CD4-positive, alpha-beta T cell (primary cell): ENCODE measurements at regions of chr17 and their contacts with region 1.

Region 1: GRCh38 chr17:35242805-35243560 is at the start of gene SLFN5:
- DNase-seq: peak; percentile 89 to 97 (median 94)
- ATAC-seq: peak; percentile 79
- H3K4me3 ChIP-seq: peak within 1 kb of the TSS; percentile 99
- H3K4me3 Mint-ChIP-seq: peak within 1 kb of the TSS; percentile 99
- H3K27ac ChIP-seq: peak within 1 kb of the TSS; percentile 92 to 99
- H3K27ac Mint-ChIP-seq: peak within 1 kb of the TSS; percentile 100
- H3K4me1 ChIP-seq: peaks cover 42% of the 10 kb centered on the region
- H3K4me1 Mint-ChIP-seq: peaks cover 61% of the 10 kb centered on the region
- H3K27me3 ChIP-seq: no peaks in the 10 kb centered on the region
- H3K27me3 Mint-ChIP-seq: no peaks in the 10 kb centered on the region
- CTCF ChIP-seq: no peak
- total RNA-seq, gene SLFN5: 28.5 to 32.7 TPM

Region 2: DNA sequence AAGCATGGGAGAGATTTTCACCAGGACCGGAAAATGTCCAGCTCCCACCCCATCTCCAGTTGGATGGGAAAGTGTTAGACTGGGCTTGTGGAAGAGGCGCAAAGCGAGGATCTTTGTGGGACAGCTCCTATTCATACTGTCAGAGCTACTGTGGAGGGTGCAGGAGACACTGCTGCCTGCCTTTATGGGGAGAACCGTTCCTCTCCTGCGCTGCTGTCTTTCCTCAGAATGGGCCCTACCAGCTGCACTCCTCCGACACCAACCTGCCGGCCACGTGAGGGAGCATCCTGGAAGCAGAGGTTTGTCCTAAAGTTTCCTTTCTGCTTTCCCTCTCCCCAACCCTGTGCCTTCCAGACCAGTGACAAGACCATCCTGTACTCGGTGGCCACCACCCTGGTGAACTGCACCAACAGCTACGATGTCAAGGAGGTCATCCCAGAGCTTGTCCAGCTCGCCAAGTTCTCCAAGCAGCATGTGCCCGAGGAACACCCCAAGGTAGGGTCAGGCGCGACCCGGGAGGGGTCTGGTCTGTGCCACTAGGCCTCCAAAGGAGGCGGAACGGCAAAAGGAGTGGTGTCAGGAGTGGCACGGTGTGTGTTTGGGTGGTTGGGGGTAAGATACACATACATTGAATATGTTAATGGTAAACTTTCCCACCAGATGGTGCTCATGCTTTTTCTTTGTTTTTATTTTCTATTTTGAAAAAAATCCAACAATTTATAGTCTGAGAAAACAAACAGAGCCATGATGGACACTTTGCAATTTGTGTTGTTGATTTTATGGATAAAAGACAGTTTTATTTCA is 71.8 kb before region 1 on chr17:
- CTCF ChIA-PET with region 1: interaction called, 3 read pairs
- POLR2A ChIA-PET with region 1: interaction called, 56 read pairs
- intact Hi-C with region 1: loop called (anchors 1 kb)
- DNase-seq: peak in 9 of 14 experiments; percentile 13 to 80 (median 42)
- ATAC-seq: peak; percentile 79
- H3K4me3 ChIP-seq: no peak overlapping the region
- H3K4me3 Mint-ChIP-seq: peak overlapping the region; percentile 80
- H3K27ac ChIP-seq: no peak overlapping the region
- H3K27ac Mint-ChIP-seq: peak overlapping the region; percentile 92
- H3K4me1 ChIP-seq: peaks cover 40% of the 10 kb centered on the region
- H3K4me1 Mint-ChIP-seq: peaks cover 52% of the 10 kb centered on the region
- H3K27me3 ChIP-seq: no peaks in the 10 kb centered on the region
- H3K27me3 Mint-ChIP-seq: no peaks in the 10 kb centered on the region
- CTCF ChIP-seq: peak; percentile 68

Region 3: GRCh38 chr17:35227546-35227945 is 15.4 kb before region 1 on chr17:
- CTCF ChIA-PET with region 1: interaction called, 7 read pairs
- POLR2A ChIA-PET with region 1: interaction called, 18 read pairs
- intact Hi-C with region 1: no loop called
- DNase-seq: no peak
- ATAC-seq: no peak
- H3K4me3 ChIP-seq: no peak overlapping the region
- H3K4me3 Mint-ChIP-seq: no peak overlapping the region
- H3K27ac ChIP-seq: no peak overlapping the region
- H3K27ac Mint-ChIP-seq: no peak overlapping the region
- H3K4me1 ChIP-seq: peaks cover 9% of the 10 kb centered on the region
- H3K4me1 Mint-ChIP-seq: peaks cover 74% of the 10 kb centered on the region
- H3K27me3 ChIP-seq: no peaks in the 10 kb centered on the region
- H3K27me3 Mint-ChIP-seq: no peaks in the 10 kb centered on the region
- CTCF ChIP-seq: no peak

Region 4: GRCh38 chr17:35359398-35359797 is 116.4 kb after region 1 on chr17:
- CTCF ChIA-PET with region 1: no interaction called
- POLR2A ChIA-PET with region 1: no interaction called
- intact Hi-C with region 1: no loop called
- DNase-seq: no peak
- ATAC-seq: no peak
- H3K4me3 ChIP-seq: no peak overlapping the region
- H3K4me3 Mint-ChIP-seq: no peak overlapping the region
- H3K27ac ChIP-seq: no peak overlapping the region
- H3K27ac Mint-ChIP-seq: no peak overlapping the region
- H3K4me1 ChIP-seq: peaks cover 7% of the 10 kb centered on the region
- H3K4me1 Mint-ChIP-seq: peaks cover 18% of the 10 kb centered on the region
- H3K27me3 ChIP-seq: no peaks in the 10 kb centered on the region
- H3K27me3 Mint-ChIP-seq: no peaks in the 10 kb centered on the region
- CTCF ChIP-seq: no peak

Region 5: DNA sequence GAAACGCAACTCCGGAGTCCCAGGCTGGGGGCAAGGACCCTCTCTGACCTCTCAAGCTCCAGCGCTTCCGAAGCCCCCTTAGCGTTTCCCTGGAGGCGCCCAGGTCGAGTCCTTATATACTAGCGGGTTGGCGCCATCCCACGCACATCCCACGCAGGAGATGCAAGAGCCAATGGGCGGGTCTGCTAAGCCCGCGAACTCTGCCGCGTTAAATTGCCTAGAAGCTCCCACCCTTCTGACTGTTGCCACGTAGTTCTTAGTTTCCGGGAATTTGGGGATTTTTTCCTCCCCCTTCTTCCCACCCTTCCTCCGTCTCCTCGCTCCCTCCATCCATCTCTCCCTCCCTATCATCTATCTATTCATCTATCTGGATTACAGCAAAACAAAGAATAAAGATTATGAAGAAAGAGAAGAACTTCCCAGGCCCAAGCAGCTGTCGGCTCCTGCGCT is 130.6 kb after region 1 on chr17 and contains the start of gene SLFN11:
- CTCF ChIA-PET with region 1: no interaction called
- POLR2A ChIA-PET with region 1: interaction called, 8 read pairs
- intact Hi-C with region 1: loop called (anchors 2 to 10 kb)
- DNase-seq: peak; percentile 50 to 94 (median 71)
- ATAC-seq: peak; percentile 88
- H3K4me3 ChIP-seq: peak within 1 kb of the TSS; percentile 84
- H3K4me3 Mint-ChIP-seq: peak within 1 kb of the TSS; percentile 96
- H3K27ac ChIP-seq: peak within 1 kb of the TSS; percentile 80 to 96
- H3K27ac Mint-ChIP-seq: peak within 1 kb of the TSS; percentile 95
- H3K4me1 ChIP-seq: peaks cover 16% of the 10 kb centered on the region
- H3K4me1 Mint-ChIP-seq: peaks cover 62% of the 10 kb centered on the region
- H3K27me3 ChIP-seq: no peaks in the 10 kb centered on the region
- H3K27me3 Mint-ChIP-seq: no peaks in the 10 kb centered on the region
- CTCF ChIP-seq: no peak
- total RNA-seq, gene SLFN11: 16.5 to 18.5 TPM

Region 6: DNA sequence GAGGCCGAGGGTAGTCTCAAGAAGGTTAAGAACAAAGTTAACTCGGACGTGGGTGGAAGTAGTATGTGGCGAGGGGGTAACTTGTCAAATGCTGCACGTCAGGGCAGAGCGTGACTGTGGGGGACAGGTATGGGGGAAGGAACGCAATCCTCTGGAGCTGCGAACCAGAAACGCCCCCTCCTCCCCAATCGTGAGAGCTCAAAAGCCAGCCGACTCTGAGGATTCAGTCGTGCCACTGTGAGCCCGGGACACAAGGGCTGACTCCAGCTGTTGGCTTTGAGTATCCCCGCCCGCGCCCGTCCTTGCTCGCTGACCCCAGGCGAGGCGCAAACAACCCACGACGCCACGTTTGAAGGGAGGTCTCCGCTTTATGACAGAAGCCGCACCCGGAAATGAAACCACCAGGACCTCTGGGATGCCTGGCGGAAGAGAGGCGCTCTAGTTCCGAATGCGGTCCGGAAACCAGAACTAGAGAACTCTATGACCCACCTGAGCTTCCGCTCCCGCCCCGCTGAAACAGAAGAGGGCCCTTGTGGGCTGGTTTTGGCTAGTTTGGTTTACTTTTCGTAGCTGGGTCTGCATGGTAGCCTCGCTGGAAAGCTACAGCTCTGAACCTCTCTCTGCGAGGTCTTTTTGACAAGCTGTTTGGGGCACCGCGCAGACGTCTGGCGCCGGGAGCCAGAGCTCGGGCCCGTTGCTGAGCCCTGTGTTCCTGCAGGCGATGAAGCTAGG is 335.4 kb after region 1 on chr17 and contains the start of gene PEX12:
- CTCF ChIA-PET with region 1: interaction called, 3 read pairs
- POLR2A ChIA-PET with region 1: interaction called, 13 read pairs
- intact Hi-C with region 1: no loop called
- DNase-seq: peak; percentile 77 to 96 (median 86)
- ATAC-seq: peak; percentile 96
- H3K4me3 ChIP-seq: peak within 1 kb of the TSS; percentile 85
- H3K4me3 Mint-ChIP-seq: peak within 1 kb of the TSS; percentile 92
- H3K27ac ChIP-seq: peak within 1 kb of the TSS; percentile 90 to 93
- H3K27ac Mint-ChIP-seq: peak within 1 kb of the TSS; percentile 97
- H3K4me1 ChIP-seq: peaks cover 21% of the 10 kb centered on the region
- H3K4me1 Mint-ChIP-seq: peaks cover 42% of the 10 kb centered on the region
- H3K27me3 ChIP-seq: no peaks in the 10 kb centered on the region
- H3K27me3 Mint-ChIP-seq: no peaks in the 10 kb centered on the region
- CTCF ChIP-seq: no peak
- total RNA-seq, gene PEX12: 3.0 to 3.2 TPM